ENCODE measurements at regions of chrX and their contacts with region 1.

Region 1: GRCh38 chrX:67636532-67636931 is 92.7 kb downstream of the AR start:
- DNase-seq: no peak
- H3K4me3 ChIP-seq: no peak overlapping the region
- H3K27ac ChIP-seq: no peak overlapping the region
- H3K4me1 ChIP-seq: no peaks in the 10 kb centered on the region
- H3K27me3 ChIP-seq: no peaks in the 10 kb centered on the region
- CTCF ChIP-seq: no peak

Region 2: GRCh38 chrX:67585401-67585800 is 51.1 kb before region 1 on chrX:
- intact Hi-C with region 1: loop called (anchors 2 kb)
- DNase-seq: no peak
- H3K4me3 ChIP-seq: no peak overlapping the region
- H3K27ac ChIP-seq: no peak overlapping the region
- H3K4me1 ChIP-seq: peaks cover 0 to 34% (median 4%) of the 10 kb centered on the region in 4 donors
- H3K27me3 ChIP-seq: no peaks in the 10 kb centered on the region
- CTCF ChIP-seq: no peak

Region 3: DNA sequence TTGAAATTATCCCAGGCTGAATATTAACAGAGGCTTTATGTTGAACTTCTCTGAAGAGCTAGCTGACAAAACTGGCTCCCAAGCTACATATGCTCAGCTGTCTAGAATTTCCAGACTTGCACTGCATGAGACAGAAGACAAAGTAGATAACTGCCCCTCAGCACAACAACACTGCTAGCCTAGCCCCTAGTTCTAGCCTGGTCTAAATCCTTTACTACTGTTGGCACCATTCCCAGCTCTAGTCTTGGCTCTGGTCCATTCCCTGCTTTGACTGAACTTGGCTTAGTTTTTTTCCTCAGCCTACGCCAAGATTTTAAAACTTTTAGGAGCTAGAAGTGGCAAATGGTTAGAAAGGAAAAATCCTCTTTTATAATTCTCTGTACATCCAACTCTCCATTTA is 804.4 kb after region 1 on chrX:
- intact Hi-C with region 1: no loop called
- DNase-seq: peak; percentile 50 to 77
- H3K4me3 ChIP-seq: no peak overlapping the region
- H3K27ac ChIP-seq: no peak overlapping the region
- H3K4me1 ChIP-seq: peaks cover 0 to 3% (median 0%) of the 10 kb centered on the region in 4 donors
- H3K27me3 ChIP-seq: no peaks in the 10 kb centered on the region
- CTCF ChIP-seq: no peak

Measured in tibial artery (tissue), 4 donors.